ENCODE measurements at regions of chr19 and their contacts with region 1.

Region 1: DNA sequence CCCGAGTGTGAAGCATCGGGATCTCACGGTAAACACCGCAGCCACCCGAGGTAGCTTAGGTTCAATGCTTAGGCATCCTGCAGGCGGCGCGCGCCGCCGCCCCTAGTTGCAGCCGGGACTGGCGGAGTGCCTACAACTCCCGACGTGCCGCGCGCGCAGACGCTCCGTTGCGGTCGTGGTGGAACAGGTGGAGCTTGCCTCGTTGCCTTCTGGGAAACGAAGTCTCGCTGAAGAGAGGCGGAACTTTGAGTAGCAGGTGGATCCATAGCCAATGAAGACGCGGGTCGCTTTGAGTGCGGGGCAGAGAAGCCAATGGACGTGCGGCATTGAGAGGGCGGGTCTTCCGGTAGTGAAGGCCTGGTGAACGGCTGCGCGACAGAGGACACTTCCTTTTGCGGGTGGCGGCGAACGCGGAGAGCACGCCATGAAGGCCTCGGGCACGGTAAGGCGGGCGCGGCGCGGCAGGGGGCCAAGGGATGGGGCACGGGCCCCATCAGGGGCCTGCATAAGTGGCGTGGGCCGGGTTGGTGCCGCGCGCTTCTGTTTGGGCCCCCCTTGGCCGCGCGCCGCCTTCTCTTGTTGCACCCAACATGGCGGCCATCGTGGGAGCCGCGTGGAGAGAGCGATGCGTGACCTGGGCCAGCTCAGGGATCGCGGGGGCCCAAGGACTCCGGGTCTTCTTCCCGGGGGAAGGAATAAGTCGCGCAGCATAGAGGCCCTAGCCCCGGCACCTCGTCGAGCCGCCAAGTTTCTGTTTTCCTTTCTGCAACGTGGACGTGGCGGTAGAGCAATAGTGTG is at the start of gene RPL18A:
- DNase-seq: peak; percentile 98 to 99 (median 99)
- ATAC-seq: peak; percentile 92 to 97 (median 94)
- H3K4me3 ChIP-seq: peak within 1 kb of the TSS; percentile 62 to 99 (median 98)
- H3K27ac ChIP-seq: peak within 1 kb of the TSS; percentile 76 to 82 (median 79)
- H3K4me1 ChIP-seq: peaks cover 0 to 9% (median 0%) of the 10 kb centered on the region in 3 donors
- H3K27me3 ChIP-seq: no peaks in the 10 kb centered on the region
- CTCF ChIP-seq: peak; percentile 36 to 57 (median 50)
- total RNA-seq, gene RPL18A: 1,116 to 2,379 (median 1,559) TPM

Region 2: DNA sequence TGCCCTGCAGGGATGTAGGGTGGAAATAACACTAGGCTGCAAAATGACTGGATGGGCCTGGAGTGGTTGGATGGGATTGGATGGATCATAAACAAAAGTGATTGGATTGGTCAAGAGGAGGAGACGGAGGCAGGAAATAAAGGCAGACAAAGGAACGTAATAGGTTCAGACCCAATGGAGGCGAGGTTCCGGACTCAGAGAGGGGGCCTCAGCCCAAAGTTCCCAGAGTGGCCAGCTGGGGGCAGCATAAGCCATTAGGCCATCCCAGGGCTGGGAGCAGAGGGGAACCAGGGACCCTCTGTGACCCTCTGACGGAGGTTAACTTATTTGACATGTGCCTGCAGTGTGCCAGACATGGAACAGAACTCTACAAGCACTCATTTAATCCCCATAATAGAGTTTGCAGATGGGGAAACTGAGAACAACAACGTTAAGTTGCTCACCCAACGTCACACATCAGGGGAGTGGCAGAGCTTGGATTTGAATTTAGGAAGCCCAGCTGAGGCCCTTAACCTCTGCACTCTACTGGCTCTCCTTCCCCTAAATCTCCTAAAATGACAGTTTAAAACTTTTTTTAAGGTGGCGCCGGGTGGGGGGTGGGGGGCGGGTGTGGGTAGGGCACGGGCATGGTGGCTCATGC is 155.8 kb before region 1 on chr19:
- intact Hi-C with region 1: loop called in 1 of 3 experiments (anchors 10 kb)
- DNase-seq: peak in 3 of 6 donors; percentile 49 to 82 (median 53)
- ATAC-seq: peak; percentile 55 to 85 (median 80)
- H3K4me3 ChIP-seq: no peak overlapping the region
- H3K27ac ChIP-seq: no peak overlapping the region
- H3K4me1 ChIP-seq: no peaks in the 10 kb centered on the region
- H3K27me3 ChIP-seq: no peaks in the 10 kb centered on the region
- CTCF ChIP-seq: peak; percentile 54 to 80 (median 70)

Region 3: DNA sequence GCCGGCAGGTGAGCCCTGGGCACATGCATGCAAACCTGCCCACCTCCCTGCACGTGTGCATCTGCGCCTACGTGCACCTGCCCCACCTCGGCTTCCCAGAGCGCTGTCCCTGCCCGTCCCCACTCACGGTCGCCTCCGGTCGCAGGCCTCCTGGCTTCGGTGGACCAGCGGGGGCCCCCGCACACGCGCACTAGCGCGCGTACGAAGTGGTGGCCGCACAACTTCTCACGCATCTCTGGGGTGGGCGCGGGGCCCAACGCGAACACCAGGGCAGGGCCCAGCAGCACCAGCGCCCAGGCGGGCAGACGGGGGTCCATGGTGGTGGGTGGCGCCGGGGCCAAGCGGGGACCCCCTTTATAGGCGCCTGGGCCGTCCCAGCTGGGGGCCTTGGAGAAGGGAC is 38.5 kb before region 1 on chr19 and contains the start of gene INSL3:
- intact Hi-C with region 1: no loop called
- DNase-seq: no peak
- ATAC-seq: no peak
- H3K4me3 ChIP-seq: no peak within 1 kb of the TSS
- H3K27ac ChIP-seq: no peak within 1 kb of the TSS
- H3K4me1 ChIP-seq: no peaks in the 10 kb centered on the region
- H3K27me3 ChIP-seq: no peaks in the 10 kb centered on the region
- CTCF ChIP-seq: no peak
- total RNA-seq, gene INSL3: not detected

Region 4: DNA sequence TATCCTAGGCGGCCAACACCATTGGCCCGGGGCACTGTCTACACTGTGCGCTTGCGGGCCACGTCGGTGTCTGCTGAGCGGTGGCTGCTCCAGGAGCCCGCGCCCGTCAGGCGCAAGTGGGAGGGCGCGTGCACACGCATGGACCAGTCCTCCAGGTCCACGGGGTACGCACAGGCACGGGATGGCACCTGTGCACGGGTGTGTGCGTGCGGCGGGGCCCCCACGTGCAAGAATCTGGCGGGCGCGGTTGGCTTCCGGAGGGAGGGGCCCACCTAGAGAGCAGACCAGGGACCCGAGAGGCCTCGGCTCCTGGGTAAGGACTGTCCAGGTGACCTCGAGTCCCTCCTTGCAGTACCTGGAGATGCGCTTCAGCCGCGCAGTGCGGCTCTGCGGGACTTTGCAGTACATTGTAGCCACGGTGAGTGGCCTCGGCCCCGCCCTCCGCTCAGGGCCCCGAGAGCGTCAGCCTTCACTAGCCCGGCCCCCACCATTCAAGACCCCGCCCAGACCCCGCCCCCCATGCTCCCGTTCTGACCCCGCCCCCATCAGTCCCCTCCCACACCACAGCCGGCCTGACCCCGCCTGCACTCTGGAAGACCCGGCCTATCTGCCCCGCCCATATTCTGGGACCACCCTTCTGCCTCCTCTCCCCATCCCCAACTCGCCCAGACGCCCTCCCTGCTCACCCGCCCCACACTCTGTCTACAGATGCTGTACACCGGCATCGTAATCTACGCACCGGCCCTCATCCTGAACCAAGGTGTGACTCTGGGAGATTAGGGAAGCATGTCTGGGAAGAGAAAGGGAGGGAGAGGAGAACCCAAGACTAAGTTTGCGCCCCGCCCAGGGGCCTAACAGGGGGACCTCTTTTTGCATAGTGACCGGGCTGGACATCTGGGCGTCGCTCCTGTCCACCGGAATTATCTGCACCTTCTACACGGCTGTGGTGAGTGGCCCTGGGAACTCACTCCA is 14.3 kb after region 1 on chr19:
- intact Hi-C with region 1: no loop called
- DNase-seq: peak in 2 of 6 donors; percentile 49 to 77
- ATAC-seq: peak; percentile 55 to 82 (median 58)
- H3K4me3 ChIP-seq: peak overlapping the region in 1 of 4 donors; percentile 36
- H3K27ac ChIP-seq: no peak overlapping the region
- H3K4me1 ChIP-seq: peaks cover 0 to 5% (median 0%) of the 10 kb centered on the region in 3 donors
- H3K27me3 ChIP-seq: peaks cover 0 to 27% (median 4%) of the 10 kb centered on the region in 4 donors
- CTCF ChIP-seq: no peak

Region 5: GRCh38 chr19:17932485-17933338 is 73.0 kb after region 1 on chr19 and contains the start of gene CCDC124:
- intact Hi-C with region 1: loop called in 1 of 3 experiments (anchors 5 kb)
- DNase-seq: peak; percentile 89 to 96 (median 94)
- ATAC-seq: peak; percentile 98 to 99 (median 98)
- H3K4me3 ChIP-seq: peak within 1 kb of the TSS; percentile 78 to 95 (median 87)
- H3K27ac ChIP-seq: peak within 1 kb of the TSS; percentile 66 to 89 (median 78)
- H3K4me1 ChIP-seq: peaks cover 0 to 10% (median 7%) of the 10 kb centered on the region in 3 donors
- H3K27me3 ChIP-seq: no peaks in the 10 kb centered on the region
- CTCF ChIP-seq: peak; percentile 55 to 82 (median 74)
- total RNA-seq, gene CCDC124: 15.0 to 35.5 (median 28.9) TPM

Region 6: DNA sequence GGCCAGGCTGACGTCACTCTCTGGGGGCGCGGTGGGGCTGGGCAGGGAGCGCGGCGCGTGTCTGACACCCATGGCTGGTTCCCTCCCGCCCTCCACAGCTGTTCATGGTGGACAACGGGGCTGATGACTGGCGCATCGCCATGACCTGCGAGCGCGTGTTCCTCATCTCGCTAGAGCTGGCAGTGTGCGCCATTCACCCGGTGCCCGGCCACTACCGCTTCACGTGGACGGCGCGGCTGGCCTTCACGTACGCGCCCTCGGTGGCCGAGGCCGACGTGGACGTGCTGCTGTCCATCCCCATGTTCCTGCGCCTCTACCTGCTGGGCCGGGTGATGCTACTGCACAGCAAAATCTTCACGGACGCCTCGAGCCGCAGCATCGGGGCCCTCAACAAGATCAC is 121.9 kb after region 1 on chr19:
- intact Hi-C with region 1: no loop called
- DNase-seq: no peak
- ATAC-seq: no peak
- H3K4me3 ChIP-seq: no peak overlapping the region
- H3K27ac ChIP-seq: no peak overlapping the region
- H3K4me1 ChIP-seq: no peaks in the 10 kb centered on the region
- H3K27me3 ChIP-seq: no peaks in the 10 kb centered on the region
- CTCF ChIP-seq: no peak

Region 7: DNA sequence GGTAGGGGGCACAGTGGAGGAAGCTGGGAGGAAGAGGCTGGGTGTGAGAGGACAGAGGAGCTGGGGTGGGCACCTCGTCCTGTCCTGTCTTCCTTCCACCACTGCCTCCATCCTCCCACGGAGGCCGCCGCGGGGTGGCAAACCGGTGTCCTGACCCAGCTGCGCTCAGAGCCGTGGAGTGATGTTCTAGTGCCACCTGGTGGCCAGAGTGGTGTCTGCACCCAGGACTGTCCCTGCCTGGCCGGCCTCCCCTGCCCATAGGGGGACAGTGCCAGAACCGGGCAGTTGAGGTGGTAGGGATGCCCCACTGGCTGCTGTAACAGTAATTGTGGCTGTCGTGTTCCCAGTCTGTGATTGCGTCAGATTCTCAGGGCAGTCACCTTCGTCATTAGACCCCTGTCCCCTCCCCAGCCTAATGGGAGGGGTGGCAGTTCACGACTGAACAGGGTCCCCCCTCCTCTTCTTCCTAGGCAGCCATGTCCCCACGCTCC is 137.1 kb after region 1 on chr19:
- intact Hi-C with region 1: loop called in 1 of 3 experiments (anchors 10 kb)
- DNase-seq: peak; percentile 75 to 96 (median 90)
- ATAC-seq: peak; percentile 81 to 85 (median 84)
- H3K4me3 ChIP-seq: no peak overlapping the region
- H3K27ac ChIP-seq: no peak overlapping the region
- H3K4me1 ChIP-seq: no peaks in the 10 kb centered on the region
- H3K27me3 ChIP-seq: peaks cover 0 to 4% (median 0%) of the 10 kb centered on the region in 4 donors
- CTCF ChIP-seq: peak; percentile 92 to 98 (median 98)

Region 8: GRCh38 chr19:18339723-18340122 is 480.0 kb after region 1 on chr19:
- intact Hi-C with region 1: no loop called
- DNase-seq: no peak
- ATAC-seq: peak in 3 of 4 donors; percentile 9 to 19 (median 10)
- H3K4me3 ChIP-seq: peak overlapping the region in 2 of 4 donors; percentile 91 to 97
- H3K27ac ChIP-seq: peak overlapping the region in 1 of 4 donors; percentile 85
- H3K4me1 ChIP-seq: peaks cover 0 to 6% (median 0%) of the 10 kb centered on the region in 3 donors
- H3K27me3 ChIP-seq: no peaks in the 10 kb centered on the region
- CTCF ChIP-seq: no peak